Activated naive CD4-positive, alpha-beta T cell treated with anti-CD3 and anti-CD28 coated beads for 36 hours (primary cell): ENCODE measurements at regions of chr5 and their contacts with region 1.

Region 1: DNA sequence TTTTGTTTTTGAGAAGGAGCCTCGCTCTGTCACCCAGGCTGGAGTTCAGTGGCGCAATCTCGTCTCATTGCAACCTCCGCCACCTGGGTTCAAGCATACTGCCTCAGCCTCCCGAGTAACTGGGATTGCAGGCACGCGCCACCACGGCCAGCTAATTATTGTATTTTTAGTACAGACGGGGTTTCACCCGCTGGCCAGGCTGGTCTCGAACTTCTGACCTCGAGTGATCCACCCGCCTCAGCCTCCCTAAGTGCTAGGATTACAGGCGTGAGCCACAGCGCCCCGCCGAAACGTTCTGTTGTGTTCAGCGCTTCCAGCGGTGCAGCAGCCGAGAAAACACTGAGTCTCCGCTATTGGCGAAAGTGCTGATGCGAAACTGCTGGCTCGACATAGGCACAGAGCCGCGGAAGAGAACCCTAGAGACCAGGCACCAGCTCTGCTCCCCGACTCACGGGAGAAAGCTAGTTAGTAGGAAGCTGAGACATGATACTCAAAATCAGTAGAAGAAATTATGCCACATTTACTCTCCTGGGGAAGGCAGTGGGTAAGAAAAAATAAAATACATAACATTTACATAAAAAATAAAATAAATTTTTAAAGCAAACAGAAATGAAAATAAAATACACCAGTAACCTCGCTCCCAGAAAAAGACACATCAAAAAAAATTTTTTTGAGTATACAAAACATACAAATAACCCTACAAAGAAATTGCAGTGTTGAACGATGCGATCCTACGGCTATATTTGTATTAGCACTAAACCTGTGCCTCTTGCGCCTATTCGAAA is 31.6 kb downstream of the ANXA2R start:
- DNase-seq: peak; percentile 93
- H3K4me3 Mint-ChIP-seq: peak overlapping the region; percentile 79
- H3K27ac Mint-ChIP-seq: peak overlapping the region; percentile 97
- H3K4me1 Mint-ChIP-seq: peaks cover 24% of the 10 kb centered on the region
- H3K27me3 Mint-ChIP-seq: no peaks in the 10 kb centered on the region

Region 2: DNA sequence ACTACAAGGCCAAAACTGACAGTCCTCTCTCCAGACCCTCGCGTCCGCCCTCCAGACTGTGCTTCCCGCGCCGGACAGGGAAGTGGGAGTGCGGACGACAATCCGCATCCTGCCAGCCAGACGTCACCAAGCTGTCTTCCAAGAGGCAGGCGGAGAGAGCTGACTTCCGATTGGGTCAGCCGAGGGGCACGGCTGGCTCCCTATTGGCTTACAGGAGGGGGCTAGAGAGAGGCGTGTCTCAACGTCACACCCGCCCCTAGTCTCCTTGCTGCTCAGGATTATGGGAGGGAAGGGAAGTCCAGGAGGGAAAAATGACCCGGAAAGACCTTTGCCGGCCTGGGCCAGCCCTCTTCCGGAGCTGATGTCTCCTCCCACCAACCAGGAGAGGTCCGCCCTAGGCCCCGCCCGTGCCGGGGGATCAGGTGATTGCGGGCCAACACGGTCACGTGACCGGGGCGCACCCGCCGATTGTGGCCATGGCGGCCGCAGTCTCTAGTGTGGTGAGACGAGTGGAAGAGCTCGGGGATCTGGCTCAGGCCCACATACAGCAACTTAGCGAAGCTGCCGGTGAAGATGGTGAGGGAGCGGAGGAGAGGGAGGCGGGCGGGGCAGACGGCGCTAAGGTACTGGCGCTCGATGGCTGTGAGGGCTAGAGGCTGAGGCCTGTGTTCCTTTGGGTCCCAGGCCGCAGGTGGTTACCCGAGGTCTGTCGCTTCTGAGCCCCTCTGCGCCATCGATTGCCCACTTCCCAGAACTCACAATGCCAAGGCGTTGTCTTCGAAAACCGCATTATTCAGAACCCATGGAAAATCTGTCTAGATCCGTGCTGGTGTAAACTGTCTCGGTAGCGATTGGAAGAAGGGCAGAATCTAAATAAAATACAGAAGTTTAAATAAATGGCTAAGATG is 1104.4 kb before region 1 on chr5 and contains the start of gene RIMOC1:
- CTCF ChIA-PET with region 1: no interaction called
- intact Hi-C with region 1: loop called (anchors 5 kb)
- DNase-seq: peak; percentile 98
- H3K4me3 Mint-ChIP-seq: peak within 1 kb of the TSS; percentile 79
- H3K27ac Mint-ChIP-seq: peak within 1 kb of the TSS; percentile 88
- H3K4me1 Mint-ChIP-seq: peaks cover 38% of the 10 kb centered on the region
- H3K27me3 Mint-ChIP-seq: no peaks in the 10 kb centered on the region
- total RNA-seq, gene RIMOC1: 16.6 to 19.6 TPM

Region 3: GRCh38 chr5:42908509-42909488 is 99.8 kb before region 1 on chr5:
- CTCF ChIA-PET with region 1: interaction called, 14 read pairs
- intact Hi-C with region 1: no loop called
- DNase-seq: peak; percentile 94
- H3K4me3 Mint-ChIP-seq: peak overlapping the region; percentile 92
- H3K27ac Mint-ChIP-seq: peak overlapping the region; percentile 75
- H3K4me1 Mint-ChIP-seq: peaks cover 10% of the 10 kb centered on the region
- H3K27me3 Mint-ChIP-seq: peaks cover 10% of the 10 kb centered on the region

Region 4: GRCh38 chr5:43019614-43020293 is 11.2 kb after region 1 on chr5:
- CTCF ChIA-PET with region 1: interaction called, 73 read pairs
- intact Hi-C with region 1: loop called (anchors 1 kb)
- DNase-seq: peak; percentile 90
- H3K4me3 Mint-ChIP-seq: peak overlapping the region; percentile 97
- H3K27ac Mint-ChIP-seq: peak overlapping the region; percentile 99
- H3K4me1 Mint-ChIP-seq: peaks cover 37% of the 10 kb centered on the region
- H3K27me3 Mint-ChIP-seq: no peaks in the 10 kb centered on the region